SK-N-SH (cell line): ENCODE measurements at regions of chr6 and their contacts with region 1.

Region 1: DNA sequence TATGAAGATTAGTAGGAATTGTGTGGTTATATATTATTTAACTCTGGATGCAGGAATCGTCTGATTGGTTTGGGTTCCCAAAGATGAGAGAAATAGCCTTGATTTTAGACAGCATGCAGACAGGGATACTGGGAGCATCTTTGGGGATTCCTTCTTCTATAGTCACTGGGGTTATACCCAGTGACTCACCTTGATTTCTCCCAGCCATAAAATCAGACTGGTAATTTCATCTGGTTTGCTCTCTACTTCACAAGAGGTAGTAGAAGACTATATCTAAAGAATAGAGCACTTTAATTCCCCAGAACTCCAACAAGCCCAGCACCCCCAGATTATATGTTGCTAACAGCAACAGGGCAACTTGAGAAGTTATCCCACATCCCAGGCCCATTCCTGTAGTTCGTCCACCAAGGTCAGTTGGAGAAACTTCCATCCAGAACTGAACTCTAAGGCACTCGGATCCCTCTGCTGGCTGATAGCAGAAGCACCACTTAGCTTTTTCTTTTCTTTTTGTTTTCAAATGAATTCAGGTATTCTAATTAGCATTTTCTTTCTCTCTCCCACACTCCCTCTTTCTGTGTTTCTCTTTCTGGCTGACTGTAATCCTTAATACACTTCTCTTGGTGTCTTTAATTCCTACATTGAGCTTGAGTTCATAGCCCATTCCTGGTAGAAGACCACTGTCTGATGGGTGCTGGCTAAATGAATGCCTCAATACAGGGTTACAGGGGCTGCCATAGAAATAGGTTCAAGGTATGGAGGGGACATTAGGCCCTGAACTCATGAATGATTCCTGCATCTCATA is 20.4 kb upstream of the EFHC1 start:
- DNase-seq: peak; percentile 70
- H3K4me3 ChIP-seq: no peak overlapping the region; a peak in 1 of 4 replicates
- H3K27ac ChIP-seq: no peak overlapping the region; a peak in 1 of 4 replicates
- H3K4me1 ChIP-seq: peaks cover 6 to 16% of the 10 kb centered on the region in 2 experiments; a peak in 2 of 4 replicates
- H3K27me3 ChIP-seq: no peaks in the 10 kb centered on the region
- CTCF ChIP-seq: peak; percentile 89
- EP300 ChIP-seq: no peak
- RAD21 ChIP-seq: peak; percentile 91

Region 2: DNA sequence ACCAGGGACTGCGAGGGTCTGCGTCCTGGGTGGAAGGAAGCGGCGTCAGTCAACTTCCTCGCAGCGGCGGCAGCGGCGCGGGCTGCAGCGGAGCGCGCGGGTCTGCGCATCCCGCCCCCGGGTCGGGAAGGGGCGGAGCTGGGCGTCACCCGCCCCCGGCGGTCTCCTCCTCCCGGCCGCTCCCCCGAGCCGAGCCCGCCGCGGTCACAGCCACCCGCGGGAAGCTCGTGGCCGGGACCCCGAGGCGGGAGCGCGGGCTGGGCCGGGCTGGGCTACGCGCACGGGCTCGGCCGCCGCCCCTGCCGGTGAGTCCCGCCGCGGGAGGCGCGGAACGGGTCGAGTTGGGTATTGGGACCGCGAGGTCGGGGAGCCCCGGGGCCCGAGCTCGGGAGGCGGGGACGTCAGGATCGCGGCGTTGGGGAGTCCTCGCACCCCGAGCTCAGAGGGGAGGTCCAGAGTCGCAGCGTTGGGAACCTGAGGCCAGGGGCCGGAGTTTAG is 37.7 kb before region 1 on chr6 and contains the start of gene PAQR8:
- CTCF ChIA-PET with region 1: interaction called, 13 read pairs
- POLR2A ChIA-PET with region 1: no interaction called
- DNase-seq: peak; percentile 97
- H3K4me3 ChIP-seq: peak within 1 kb of the TSS; percentile 93 to 97
- H3K27ac ChIP-seq: peak within 1 kb of the TSS; percentile 47 to 80; a peak in 3 of 4 replicates
- H3K4me1 ChIP-seq: peaks cover 0 to 28% of the 10 kb centered on the region in 2 experiments; a peak in 3 of 4 replicates
- H3K27me3 ChIP-seq: no peaks in the 10 kb centered on the region
- CTCF ChIP-seq: no peak
- EP300 ChIP-seq: no peak
- RAD21 ChIP-seq: no peak
- polyA plus RNA-seq, gene PAQR8: 2.3 and 2.4 TPM in 2 replicates

Region 3: GRCh38 chr6:52375780-52376556 is 23.7 kb before region 1 on chr6:
- CTCF ChIA-PET with region 1: interaction called, 15 read pairs
- POLR2A ChIA-PET with region 1: no interaction called
- DNase-seq: no peak
- H3K4me3 ChIP-seq: no peak overlapping the region
- H3K27ac ChIP-seq: no peak overlapping the region
- H3K4me1 ChIP-seq: no peaks in the 10 kb centered on the region; a peak in 1 of 4 replicates
- H3K27me3 ChIP-seq: no peaks in the 10 kb centered on the region
- CTCF ChIP-seq: no peak
- EP300 ChIP-seq: no peak
- RAD21 ChIP-seq: no peak